Activated CD4-positive, alpha-beta T cell treated with anti-CD3 and anti-CD28 coated beads, Interleukin-2, amount 10 ng/mL, durations not matched to agents 24 days and 14 days (primary cell): ENCODE measurements at regions of chr3 and their contacts with region 1.

Region 1: DNA sequence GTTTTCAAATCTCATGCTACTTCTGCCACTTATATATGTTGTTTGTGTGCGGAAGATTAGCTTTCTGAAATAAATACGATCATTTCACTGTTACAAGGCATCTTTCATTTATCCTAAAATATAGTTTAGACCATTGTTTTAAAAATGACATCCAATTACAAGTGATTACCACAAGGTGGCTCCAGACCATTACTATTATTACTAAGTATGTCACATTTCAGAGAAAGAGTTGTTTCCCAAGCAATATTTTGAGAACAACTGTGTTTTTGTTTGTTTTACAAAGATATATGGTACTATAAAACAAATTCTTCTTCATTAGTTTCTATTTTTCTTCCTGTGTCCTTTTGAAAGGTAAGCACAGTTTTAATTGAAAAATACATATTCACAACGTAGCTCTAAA is 136.0 kb upstream of the RAP2B start:
- DNase-seq: peak; percentile 47
- H3K4me3 Mint-ChIP-seq: no peak overlapping the region
- H3K27ac Mint-ChIP-seq: no peak overlapping the region
- H3K4me1 Mint-ChIP-seq: peaks cover 2% of the 10 kb centered on the region
- H3K27me3 Mint-ChIP-seq: peaks cover 17% of the 10 kb centered on the region

Region 2: DNA sequence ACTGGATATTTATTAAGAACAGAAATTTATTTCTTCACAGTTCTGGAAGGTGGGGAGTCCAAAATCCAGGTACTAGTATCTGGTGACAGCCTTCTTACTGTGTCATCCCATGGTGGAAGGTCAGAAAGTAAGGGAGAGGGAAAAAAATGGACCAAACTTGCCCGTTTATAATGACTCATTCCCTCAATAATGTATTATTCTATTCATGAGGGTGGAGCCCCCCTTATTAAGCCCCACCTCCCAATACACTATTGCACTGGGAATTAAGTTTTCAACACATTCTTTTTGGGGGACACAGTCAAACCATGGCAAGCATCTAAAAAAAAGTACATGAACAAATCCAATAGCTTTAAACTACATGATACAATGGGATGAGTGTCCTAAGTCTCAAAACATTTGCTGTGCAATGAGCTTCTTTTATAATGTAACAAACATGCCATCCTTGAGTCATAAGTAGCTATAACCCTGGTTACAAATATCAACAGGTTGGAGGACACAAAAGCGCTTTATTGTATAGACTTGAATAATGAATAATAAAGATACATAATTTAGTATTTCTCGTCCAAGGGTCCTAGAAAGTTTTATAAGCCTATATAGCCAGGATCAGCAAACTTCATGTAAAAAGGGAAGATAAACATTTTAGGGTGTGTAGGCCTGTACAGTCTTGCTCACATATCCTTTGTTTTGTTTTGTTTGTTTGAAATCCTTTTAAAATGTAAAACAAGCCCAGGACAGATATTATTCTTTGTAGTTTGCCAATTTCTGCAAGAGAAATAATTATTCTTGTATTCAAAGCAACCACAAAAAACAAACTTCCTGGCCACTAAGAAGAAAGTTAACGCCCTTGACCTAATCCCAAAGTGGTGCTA is 24.6 kb before region 1 on chr3:
- intact Hi-C with region 1: no loop called
- DNase-seq: no peak
- H3K4me3 Mint-ChIP-seq: no peak overlapping the region
- H3K27ac Mint-ChIP-seq: no peak overlapping the region
- H3K4me1 Mint-ChIP-seq: no peaks in the 10 kb centered on the region
- H3K27me3 Mint-ChIP-seq: no peaks in the 10 kb centered on the region

Region 3: GRCh38 chr3:153595186-153595815 is 569.3 kb after region 1 on chr3:
- intact Hi-C with region 1: loop called (anchors 5 kb)
- DNase-seq: no peak
- H3K4me3 Mint-ChIP-seq: no peak overlapping the region
- H3K27ac Mint-ChIP-seq: no peak overlapping the region
- H3K4me1 Mint-ChIP-seq: peaks cover 5% of the 10 kb centered on the region
- H3K27me3 Mint-ChIP-seq: no peaks in the 10 kb centered on the region

Region 4: DNA sequence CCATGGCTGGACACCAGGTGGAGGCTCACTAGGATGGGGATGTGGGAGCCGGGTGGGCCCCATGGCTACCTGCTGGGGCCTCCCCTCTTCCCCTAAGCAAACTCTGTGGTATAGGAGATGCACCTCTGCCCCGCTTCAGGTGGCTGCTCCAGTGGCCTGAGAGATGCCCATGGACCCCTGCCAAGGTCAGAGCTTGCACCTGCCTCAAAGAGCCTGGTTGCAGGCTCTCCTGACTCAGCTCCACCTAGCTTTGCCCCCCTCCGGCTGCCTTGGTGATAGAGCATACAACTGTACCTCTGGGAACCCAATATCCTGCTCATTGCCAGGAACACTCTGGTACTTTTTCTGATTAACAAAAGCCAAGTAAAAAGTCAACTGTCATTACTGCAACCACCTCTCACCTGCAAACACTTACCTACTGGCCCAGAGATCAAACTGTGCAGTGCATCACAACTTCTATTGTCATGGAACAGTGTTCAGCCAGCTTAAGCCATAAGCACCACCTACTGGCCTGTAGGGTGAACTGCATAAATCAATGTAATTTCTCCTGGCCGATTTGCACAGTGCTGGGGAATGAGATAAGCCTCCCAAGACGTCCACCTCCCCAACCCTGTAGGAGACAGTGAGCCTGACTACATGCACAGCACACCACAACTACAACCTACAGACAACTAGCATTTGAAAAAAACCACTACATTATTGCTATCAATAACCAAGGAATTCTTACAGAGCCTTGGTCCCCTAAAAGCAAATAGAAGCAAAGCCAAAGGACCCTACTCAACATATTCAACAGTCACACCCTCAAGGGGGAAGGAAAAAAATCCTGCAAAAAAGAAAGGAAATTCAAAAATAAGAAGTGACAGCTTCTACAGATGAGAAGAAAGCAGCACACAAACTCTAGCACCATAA is 742.8 kb after region 1 on chr3:
- intact Hi-C with region 1: loop called (anchors 5 kb)
- DNase-seq: peak; percentile 84
- H3K4me3 Mint-ChIP-seq: no peak overlapping the region
- H3K27ac Mint-ChIP-seq: no peak overlapping the region
- H3K4me1 Mint-ChIP-seq: peaks cover 4% of the 10 kb centered on the region
- H3K27me3 Mint-ChIP-seq: peaks cover 19% of the 10 kb centered on the region

Region 5: DNA sequence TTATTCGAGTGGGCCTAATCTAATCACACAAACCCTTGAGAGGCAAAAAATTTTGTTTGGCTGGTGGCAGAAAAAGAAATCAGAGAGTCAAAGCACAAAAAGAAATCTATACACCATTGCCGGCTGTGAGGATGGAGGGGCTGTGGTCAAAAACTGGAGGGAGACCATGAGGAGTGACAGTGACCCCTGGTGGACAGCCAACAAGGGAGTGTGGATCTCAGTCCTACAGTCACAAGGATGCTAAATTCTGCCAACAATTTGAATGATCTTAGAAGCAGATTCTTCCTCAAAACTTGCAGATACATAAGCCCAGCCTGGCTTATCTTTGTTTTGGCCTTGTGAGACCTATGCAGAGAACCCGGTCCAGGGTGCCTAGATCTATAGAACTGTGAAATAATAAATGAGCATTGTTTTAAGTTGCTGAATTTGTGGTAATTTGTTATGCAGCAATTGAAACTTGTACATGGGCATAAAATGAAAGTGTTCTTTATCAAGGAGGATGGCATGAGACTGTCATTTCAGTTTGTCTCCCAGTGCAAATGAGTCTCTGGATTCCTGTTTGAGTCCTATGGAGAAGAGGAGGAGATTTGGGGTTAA is 992.2 kb after region 1 on chr3:
- intact Hi-C with region 1: loop called (anchors 5 kb)
- DNase-seq: peak; percentile 71
- H3K4me3 Mint-ChIP-seq: no peak overlapping the region
- H3K27ac Mint-ChIP-seq: no peak overlapping the region
- H3K4me1 Mint-ChIP-seq: no peaks in the 10 kb centered on the region
- H3K27me3 Mint-ChIP-seq: no peaks in the 10 kb centered on the region

Region 6: GRCh38 chr3:154252759-154253638 is 1227.0 kb after region 1 on chr3:
- intact Hi-C with region 1: loop called (anchors 2 kb)
- DNase-seq: peak; percentile 89
- H3K4me3 Mint-ChIP-seq: no peak overlapping the region
- H3K27ac Mint-ChIP-seq: no peak overlapping the region
- H3K4me1 Mint-ChIP-seq: peaks cover 3% of the 10 kb centered on the region
- H3K27me3 Mint-ChIP-seq: no peaks in the 10 kb centered on the region